ENCODE measurements at regions of chr5 and their contacts with region 1.

Region 1: DNA sequence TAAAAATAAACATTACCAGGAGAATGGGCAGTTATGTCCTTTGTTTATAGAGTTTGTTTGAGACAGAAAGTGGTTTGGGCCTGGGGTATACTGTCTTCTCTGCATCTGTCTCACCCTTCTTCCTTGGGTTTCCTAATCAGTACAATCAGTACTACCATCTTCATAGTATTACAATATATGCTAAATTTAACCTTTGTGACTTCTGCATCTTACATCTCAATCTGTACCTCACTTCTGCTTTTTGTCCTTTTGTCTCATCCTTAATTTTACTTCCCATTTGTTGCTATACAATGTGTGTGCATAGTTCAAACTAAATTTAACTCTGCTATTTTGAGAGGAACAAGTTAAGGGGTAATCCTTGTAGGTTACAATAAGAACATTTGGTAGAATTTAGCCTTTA is 19.6 kb downstream of the FBXO38 start:
- DNase-seq: peak; percentile 66 to 86 (median 77)
- H3K4me3 ChIP-seq: peak overlapping the region in 1 of 3 experiments; percentile 35
- H3K4me3 Mint-ChIP-seq: peak overlapping the region in 1 of 2 donors; percentile 33
- H3K27ac ChIP-seq: peak overlapping the region in 1 of 2 donors; percentile 85
- H3K27ac Mint-ChIP-seq: peak overlapping the region; percentile 86 to 96 (median 93)
- H3K4me1 ChIP-seq: peaks cover 40 to 47% of the 10 kb centered on the region in 2 donors
- H3K4me1 Mint-ChIP-seq: peaks cover 48% of the 10 kb centered on the region
- H3K27me3 ChIP-seq: no peaks in the 10 kb centered on the region
- H3K27me3 Mint-ChIP-seq: peaks cover 0 to 1% (median 0%) of the 10 kb centered on the region in 3 donors
- CTCF ChIP-seq: no peak

Region 2: GRCh38 chr5:148237785-148238184 is 165.6 kb before region 1 on chr5:
- intact Hi-C with region 1: no loop called
- DNase-seq: no peak
- H3K4me3 ChIP-seq: no peak overlapping the region
- H3K4me3 Mint-ChIP-seq: no peak overlapping the region
- H3K27ac ChIP-seq: no peak overlapping the region
- H3K27ac Mint-ChIP-seq: no peak overlapping the region
- H3K4me1 ChIP-seq: no peaks in the 10 kb centered on the region
- H3K4me1 Mint-ChIP-seq: no peaks in the 10 kb centered on the region
- H3K27me3 ChIP-seq: no peaks in the 10 kb centered on the region
- H3K27me3 Mint-ChIP-seq: peaks cover 3 to 8% (median 5%) of the 10 kb centered on the region in 3 donors
- CTCF ChIP-seq: no peak

Region 3: DNA sequence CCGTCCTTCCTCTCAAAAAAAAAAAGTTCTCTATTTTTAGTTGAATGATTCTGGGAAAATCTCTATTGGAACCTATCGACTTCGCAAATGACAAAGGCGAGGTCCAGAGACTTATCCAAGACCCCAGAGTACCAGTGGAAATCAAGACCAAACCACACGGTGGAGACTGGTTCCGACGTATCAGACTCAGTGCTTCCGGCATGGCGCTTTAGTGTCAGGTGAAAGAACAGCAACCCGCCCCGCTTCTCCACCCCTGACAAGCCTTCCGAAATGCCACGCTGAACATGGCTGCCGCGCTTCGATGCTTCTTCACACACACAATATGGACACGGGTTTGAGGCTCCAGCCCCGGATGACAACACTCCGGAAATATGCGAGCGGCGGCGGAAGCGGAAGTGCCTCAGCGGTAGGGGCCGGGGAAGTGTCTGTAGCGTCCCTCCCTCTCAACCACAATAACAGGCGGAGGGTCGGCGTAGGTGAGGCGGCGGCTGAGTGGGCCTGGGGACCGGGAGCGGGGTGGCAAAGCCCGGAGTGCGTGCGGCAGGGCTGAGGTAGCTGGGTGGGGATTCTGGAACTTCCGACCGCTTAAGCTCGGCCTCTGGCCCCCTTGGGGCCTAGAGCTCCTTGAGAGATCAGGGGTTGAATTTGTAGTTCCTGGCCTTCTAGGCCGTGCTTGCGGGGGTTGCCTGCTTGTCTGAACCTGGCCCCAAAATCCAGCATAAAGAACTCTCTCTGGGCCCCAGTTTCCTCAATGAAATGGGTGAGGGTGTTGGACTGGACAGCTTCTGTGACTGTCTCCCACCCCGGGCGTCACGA is 19.6 kb before region 1 on chr5 and contains the start of gene FBXO38:
- intact Hi-C with region 1: loop called in 1 of 2 experiments (anchors 2 kb)
- DNase-seq: peak; percentile 95 to 98 (median 95)
- H3K4me3 ChIP-seq: peak within 1 kb of the TSS; percentile 82 to 86 (median 85)
- H3K4me3 Mint-ChIP-seq: peak within 1 kb of the TSS; percentile 88 to 97
- H3K27ac ChIP-seq: peak within 1 kb of the TSS; percentile 91 to 97
- H3K27ac Mint-ChIP-seq: peak within 1 kb of the TSS; percentile 95 to 99 (median 98)
- H3K4me1 ChIP-seq: peaks cover 27 to 30% of the 10 kb centered on the region in 2 donors
- H3K4me1 Mint-ChIP-seq: peaks cover 46% of the 10 kb centered on the region
- H3K27me3 ChIP-seq: no peaks in the 10 kb centered on the region
- H3K27me3 Mint-ChIP-seq: peaks cover 0 to 4% (median 2%) of the 10 kb centered on the region in 3 donors
- CTCF ChIP-seq: no peak
- polyA plus RNA-seq, gene FBXO38: 6.8 to 22.1 (median 14.8) TPM

Measured in CD14-positive monocyte (primary cell).